H1 (cell line): ENCODE measurements at regions of chr2 and their contacts with region 1.

Region 1: DNA sequence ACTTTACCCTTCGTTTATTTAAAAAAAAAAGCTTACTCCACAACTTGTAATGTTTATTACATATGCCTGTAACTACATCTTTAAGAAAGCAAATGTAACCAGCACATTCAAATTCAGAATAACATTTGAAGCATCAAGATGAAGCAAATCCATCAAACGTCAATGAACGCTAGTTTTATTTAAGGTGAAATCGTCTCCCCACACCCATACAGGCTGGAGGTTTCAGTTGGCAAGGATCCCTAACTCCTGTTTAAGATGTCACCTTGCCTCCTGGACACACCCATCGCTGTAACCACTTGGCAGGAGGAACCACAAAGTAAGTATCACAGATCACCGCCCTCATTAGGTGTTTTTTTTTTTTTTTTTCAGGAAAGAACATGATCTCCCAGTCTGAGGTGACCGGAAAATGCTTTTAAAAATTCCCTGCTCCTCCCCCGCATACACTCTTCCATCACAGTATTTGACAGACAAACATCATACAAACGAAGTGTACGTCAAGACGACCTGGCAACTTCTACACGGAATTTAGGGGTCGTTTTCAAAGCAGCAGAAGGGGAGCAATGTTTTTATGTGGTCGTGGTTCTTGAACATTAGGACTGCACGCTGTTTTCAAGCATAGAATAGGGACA is 19.7 kb upstream of the STPG4 start:
- DNase-seq: no peak
- H3K4me3 ChIP-seq: peak overlapping the region; percentile 82 to 97 (median 88)
- H3K27ac ChIP-seq: no peak overlapping the region
- H3K4me1 ChIP-seq: peaks cover 6 to 24% (median 19%) of the 10 kb centered on the region in 4 experiments; a peak in 6 of 7 replicates
- H3K27me3 ChIP-seq: no peaks in the 10 kb centered on the region
- CTCF ChIP-seq: no peak
- EP300 ChIP-seq: no peak
- POLR2A ChIP-seq: peak in 1 of 2 experiments; percentile 51; a peak in 1 of 3 replicates
- RAD21 ChIP-seq: 0 out of 4 replicates have a peak, but pooled peaks of 1 of the 2 experiments have one; percentile 1

Region 2: DNA sequence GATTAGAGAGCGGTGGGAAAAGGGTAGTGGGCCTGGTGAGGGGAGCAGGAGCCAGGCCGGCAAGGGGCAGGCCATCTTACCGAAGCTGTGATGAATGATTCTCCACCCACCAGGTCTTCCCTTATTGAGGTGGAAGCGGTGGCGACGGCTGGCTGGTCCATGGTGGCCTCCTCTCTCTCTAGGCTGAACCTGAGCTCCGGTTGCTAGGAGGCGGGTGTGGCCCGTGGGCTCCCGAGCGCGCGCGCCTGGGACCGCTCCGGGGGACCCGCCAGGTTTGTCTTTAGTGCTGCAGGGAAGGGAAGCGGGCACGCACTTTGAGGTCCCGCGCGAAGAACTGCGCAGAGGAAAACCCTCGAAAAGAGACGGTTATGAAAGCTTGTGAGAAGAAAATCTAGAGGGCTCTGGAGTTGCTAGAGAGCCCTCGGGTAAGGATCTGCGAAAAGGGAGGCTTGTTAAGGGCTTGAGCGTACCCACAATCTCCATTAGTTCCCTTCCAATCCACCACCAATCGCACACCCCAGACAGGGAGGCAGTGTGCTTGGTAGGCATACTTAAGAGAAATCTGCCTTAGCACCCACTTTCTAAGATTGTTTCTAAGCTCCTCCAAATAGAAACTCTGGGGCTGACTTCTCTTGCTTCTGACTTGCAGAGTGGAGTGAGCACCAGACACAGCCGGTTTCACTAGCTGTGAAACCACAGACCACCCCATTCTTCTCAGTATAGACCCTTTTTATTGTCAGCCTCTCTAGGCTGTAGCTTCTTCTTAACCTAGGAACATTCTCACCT is 19.6 kb before region 1 on chr2 and contains the start of gene STPG4:
- CTCF ChIA-PET with region 1: no interaction called
- POLR2A ChIA-PET with region 1: interaction called, 40 read pairs
- DNase-seq: no peak
- H3K4me3 ChIP-seq: no peak within 1 kb of the TSS
- H3K27ac ChIP-seq: no peak within 1 kb of the TSS; the same call in 1 of the 2 replicates
- H3K4me1 ChIP-seq: no peaks in the 10 kb centered on the region
- H3K27me3 ChIP-seq: no peaks in the 10 kb centered on the region
- CTCF ChIP-seq: no peak
- EP300 ChIP-seq: no peak
- POLR2A ChIP-seq: no peak
- RAD21 ChIP-seq: no peak
- total RNA-seq, gene STPG4: 0.27 and 0.28 TPM in 2 replicates